Heart right ventricle (tissue), 16 donors: ENCODE measurements at regions of chr7 and their contacts with region 1.

Region 1: DNA sequence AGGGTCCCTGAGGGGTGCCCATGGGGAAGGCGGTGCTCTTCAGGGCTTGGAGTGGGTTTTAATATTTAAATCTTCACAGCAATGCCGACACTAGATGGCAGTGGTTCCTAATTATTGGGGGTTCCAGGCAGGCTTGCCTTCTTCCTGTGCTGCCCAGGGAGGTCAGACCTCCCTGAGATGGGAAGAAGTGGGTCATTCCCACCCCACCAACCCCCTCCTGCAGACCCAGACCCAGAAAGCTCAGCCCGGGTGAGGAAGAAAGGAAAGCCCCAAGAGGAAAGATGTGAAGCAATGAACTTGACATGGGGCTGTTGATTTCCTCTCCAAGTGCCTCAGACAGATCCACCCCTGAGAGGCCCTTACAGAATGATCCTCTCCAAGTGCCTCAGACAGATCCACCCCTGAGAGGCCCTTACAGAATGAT is 85.1 kb upstream of the LANCL2 start:
- DNase-seq: peak in 1 of 2 donors; percentile 67
- ATAC-seq: peak; percentile 71 to 90 (median 86)
- H3K4me3 ChIP-seq: no peak overlapping the region
- H3K27ac ChIP-seq: no peak overlapping the region
- H3K4me1 ChIP-seq: no peaks in the 10 kb centered on the region
- H3K27me3 ChIP-seq: peaks cover 0 to 5% (median 0%) of the 10 kb centered on the region in 7 donors
- CTCF ChIP-seq: peak; percentile 34 to 78 (median 65)

Region 2: DNA sequence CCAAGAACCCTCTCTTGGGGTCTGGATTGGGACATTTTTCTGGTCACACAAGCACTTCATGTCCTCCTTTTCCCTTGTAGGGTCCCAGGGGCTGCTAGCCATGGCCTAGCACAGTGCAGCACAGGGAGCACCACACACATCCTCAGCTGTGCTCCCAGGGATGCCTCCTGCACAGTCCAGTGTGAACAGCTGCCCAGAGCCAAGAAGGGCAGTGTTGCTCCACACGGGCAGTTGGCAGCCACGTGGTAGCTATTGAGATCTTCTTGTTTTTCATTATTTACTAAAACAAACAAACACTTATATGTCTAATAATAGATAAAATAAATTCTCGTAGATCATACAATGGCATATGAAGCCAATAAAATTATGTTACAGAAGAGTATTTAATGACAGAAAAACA is 71.2 kb after region 1 on chr7:
- intact Hi-C with region 1: loop called in 1 of 10 experiments (anchors 10 kb)
- DNase-seq: no peak
- ATAC-seq: no peak
- H3K4me3 ChIP-seq: no peak overlapping the region
- H3K27ac ChIP-seq: no peak overlapping the region
- H3K4me1 ChIP-seq: no peaks in the 10 kb centered on the region
- H3K27me3 ChIP-seq: peaks cover 0 to 9% (median 0%) of the 10 kb centered on the region in 7 donors
- CTCF ChIP-seq: no peak

Region 3: DNA sequence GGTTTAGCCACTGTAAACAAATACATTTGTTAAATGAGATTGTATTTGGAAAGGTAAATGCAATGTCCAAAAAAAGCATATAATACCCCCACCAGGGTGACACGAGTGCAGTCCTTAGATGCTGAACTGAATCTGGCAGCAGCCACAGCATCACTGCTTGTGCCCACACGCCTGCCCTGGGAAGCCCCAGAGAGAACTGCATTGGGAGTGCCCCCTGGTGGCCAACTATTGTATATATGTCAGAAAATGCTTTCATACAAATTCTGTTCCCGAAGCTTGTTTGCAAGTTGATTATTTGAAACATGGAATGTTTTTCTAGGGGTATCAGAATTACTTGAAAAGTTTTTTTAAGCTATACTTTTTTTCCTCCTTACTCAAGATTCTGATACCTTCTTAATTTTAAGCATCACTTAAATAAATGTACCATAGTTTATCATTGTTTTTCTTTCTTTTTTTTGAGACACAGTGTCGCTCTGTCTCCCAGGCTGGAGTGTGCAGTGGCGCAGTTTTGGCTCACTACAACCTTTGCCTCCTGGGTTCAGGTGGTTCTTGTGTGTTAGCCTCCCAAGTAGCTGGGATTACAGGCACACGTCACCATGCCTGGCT is 135.2 kb after region 1 on chr7:
- intact Hi-C with region 1: loop called (anchors 1 to 5 kb)
- DNase-seq: peak; percentile 66 to 83
- ATAC-seq: peak; percentile 72 to 91 (median 79)
- H3K4me3 ChIP-seq: no peak overlapping the region
- H3K27ac ChIP-seq: no peak overlapping the region
- H3K4me1 ChIP-seq: no peaks in the 10 kb centered on the region
- H3K27me3 ChIP-seq: no peaks in the 10 kb centered on the region
- CTCF ChIP-seq: peak; percentile 70 to 90 (median 86)